ENCODE measurements at regions of chr5 and their contacts with region 1.

Region 1: GRCh38 chr5:132963175-132964104 is at the start of gene AFF4:
- DNase-seq: peak; percentile 83
- H3K4me3 Mint-ChIP-seq: peak within 1 kb of the TSS; percentile 93
- H3K27ac Mint-ChIP-seq: peak within 1 kb of the TSS; percentile 95
- H3K4me1 Mint-ChIP-seq: peaks cover 17% of the 10 kb centered on the region
- H3K27me3 Mint-ChIP-seq: no peaks in the 10 kb centered on the region
- total RNA-seq, gene AFF4: 33.1 and 35.1 TPM in 2 replicates

Region 2: GRCh38 chr5:132896685-132897084 is 66.8 kb before region 1 on chr5:
- intact Hi-C with region 1: no loop called
- DNase-seq: no peak
- H3K4me3 Mint-ChIP-seq: no peak overlapping the region
- H3K27ac Mint-ChIP-seq: peak overlapping the region; percentile 54
- H3K4me1 Mint-ChIP-seq: peaks cover 4% of the 10 kb centered on the region
- H3K27me3 Mint-ChIP-seq: no peaks in the 10 kb centered on the region

Region 3: GRCh38 chr5:133025804-133026663 is 62.6 kb after region 1 on chr5 and contains the start of gene ZCCHC10:
- intact Hi-C with region 1: loop called (anchors 1 kb)
- DNase-seq: peak; percentile 89
- H3K4me3 Mint-ChIP-seq: peak within 1 kb of the TSS; percentile 92
- H3K27ac Mint-ChIP-seq: peak within 1 kb of the TSS; percentile 87
- H3K4me1 Mint-ChIP-seq: peaks cover 11% of the 10 kb centered on the region
- H3K27me3 Mint-ChIP-seq: no peaks in the 10 kb centered on the region
- total RNA-seq, gene ZCCHC10: 35.7 and 39.3 TPM in 2 replicates

Region 4: GRCh38 chr5:133051580-133052332 is 88.3 kb after region 1 on chr5 and contains the start of gene HSPA4:
- intact Hi-C with region 1: loop called (anchors 1 kb)
- DNase-seq: peak; percentile 97
- H3K4me3 Mint-ChIP-seq: peak within 1 kb of the TSS; percentile 84
- H3K27ac Mint-ChIP-seq: peak within 1 kb of the TSS; percentile 99
- H3K4me1 Mint-ChIP-seq: peaks cover 30% of the 10 kb centered on the region
- H3K27me3 Mint-ChIP-seq: no peaks in the 10 kb centered on the region
- total RNA-seq, gene HSPA4: 223 and 229 TPM in 2 replicates

Measured in activated T-helper 2 cell treated with anti-CD3 and anti-CD28 coated beads, Interferon-gamma antibody, Interleukin-2, Interleukin-4, amounts not matched to agents 10 μg/mL and 5 μg/mL and 100 μg/mL, durations not matched to agents 14 hours and 24 hours and 36 hours (primary cell).